Activated naive CD4-positive, alpha-beta T cell treated with anti-CD3 and anti-CD28 coated beads for 36 hours (primary cell): ENCODE measurements at regions of chr20 and their contacts with region 1.

Region 1: DNA sequence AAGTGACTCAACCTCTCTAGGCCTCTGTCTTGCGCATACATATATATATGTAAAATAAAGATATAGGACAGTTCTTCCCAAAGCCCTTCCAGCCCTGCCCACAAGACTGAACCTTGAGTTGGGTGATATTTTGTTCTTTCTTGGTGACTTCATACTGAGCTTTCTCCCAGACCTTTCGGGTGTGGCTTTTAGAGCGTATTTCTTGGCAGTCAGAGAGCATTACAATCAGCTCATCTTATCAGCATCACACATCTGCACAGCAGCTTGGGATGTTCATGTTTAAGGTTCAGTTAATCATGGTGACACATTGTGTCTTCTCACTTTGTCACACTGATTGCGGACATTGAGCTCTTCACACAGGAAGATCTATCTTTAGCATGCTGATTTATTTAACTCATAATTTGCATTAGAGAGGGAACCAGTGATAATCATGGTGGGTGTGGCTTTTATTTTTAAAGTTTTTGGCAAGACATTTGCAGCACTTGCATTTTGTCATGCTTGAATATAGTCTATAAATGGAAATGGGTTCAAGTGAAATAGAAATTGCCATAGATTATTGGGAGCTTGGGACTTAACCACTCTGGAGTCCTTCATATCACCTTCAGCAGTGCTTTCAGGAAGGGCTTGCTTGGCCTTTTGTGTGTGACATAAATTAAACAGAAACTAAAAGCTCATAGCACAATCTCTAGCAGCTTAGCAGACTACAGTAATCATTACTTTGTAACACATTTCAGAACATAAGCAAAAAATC is 8.3 kb downstream of the KIF3B start:
- DNase-seq: peak; percentile 78
- H3K4me3 Mint-ChIP-seq: peak overlapping the region; percentile 60
- H3K27ac Mint-ChIP-seq: peak overlapping the region; percentile 92
- H3K4me1 Mint-ChIP-seq: peaks cover 88% of the 10 kb centered on the region
- H3K27me3 Mint-ChIP-seq: no peaks in the 10 kb centered on the region

Region 2: DNA sequence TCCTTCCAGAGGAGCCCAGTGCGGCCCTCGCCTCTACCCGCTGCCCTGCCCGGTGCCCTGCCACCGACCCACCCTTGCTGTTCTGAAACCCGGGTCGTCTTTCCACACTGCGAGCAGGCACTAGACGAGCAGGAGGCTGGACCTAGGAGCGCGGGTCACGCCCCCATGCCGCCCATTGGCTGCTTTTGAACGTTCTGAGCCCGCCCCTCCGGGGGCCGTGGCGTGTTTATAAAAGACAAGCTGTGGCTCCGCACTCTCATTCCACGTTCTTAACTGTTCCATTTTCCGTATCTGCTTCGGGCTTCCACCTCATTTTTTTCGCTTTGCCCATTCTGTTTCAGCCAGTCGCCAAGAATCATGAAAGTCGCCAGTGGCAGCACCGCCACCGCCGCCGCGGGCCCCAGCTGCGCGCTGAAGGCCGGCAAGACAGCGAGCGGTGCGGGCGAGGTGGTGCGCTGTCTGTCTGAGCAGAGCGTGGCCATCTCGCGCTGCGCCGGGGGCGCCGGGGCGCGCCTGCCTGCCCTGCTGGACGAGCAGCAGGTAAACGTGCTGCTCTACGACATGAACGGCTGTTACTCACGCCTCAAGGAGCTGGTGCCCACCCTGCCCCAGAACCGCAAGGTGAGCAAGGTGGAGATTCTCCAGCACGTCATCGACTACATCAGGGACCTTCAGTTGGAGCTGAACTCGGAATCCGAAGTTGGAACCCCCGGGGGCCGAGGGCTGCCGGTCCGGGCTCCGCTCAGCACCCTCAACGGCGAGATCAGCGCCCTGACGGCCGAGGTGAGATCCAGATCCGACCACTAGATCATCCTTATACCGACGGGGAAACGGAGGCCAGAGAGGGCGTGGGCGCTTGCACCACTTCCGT is 680.5 kb before region 1 on chr20 and contains the start of gene ID1:
- CTCF ChIA-PET with region 1: no interaction called
- intact Hi-C with region 1: loop called (anchors 5 kb)
- DNase-seq: peak; percentile 89
- H3K4me3 Mint-ChIP-seq: peak within 1 kb of the TSS; percentile 85
- H3K27ac Mint-ChIP-seq: no peak within 1 kb of the TSS
- H3K4me1 Mint-ChIP-seq: peaks cover 26% of the 10 kb centered on the region
- H3K27me3 Mint-ChIP-seq: peaks cover 48% of the 10 kb centered on the region
- total RNA-seq, gene ID1: 1.8 to 2.4 TPM

Region 3: GRCh38 chr20:32207626-32208498 is 77.9 kb before region 1 on chr20 and contains the starts of genes PLAGL2 and POFUT1:
- CTCF ChIA-PET with region 1: interaction called, 5 read pairs
- intact Hi-C with region 1: loop called (anchors 1 kb)
- DNase-seq: peak; percentile 92
- H3K4me3 Mint-ChIP-seq: peak within 1 kb of the TSS; percentile 99
- H3K27ac Mint-ChIP-seq: peak within 1 kb of the TSS; percentile 98
- H3K4me1 Mint-ChIP-seq: peaks cover 65% of the 10 kb centered on the region
- H3K27me3 Mint-ChIP-seq: no peaks in the 10 kb centered on the region
- total RNA-seq, gene PLAGL2: 63.3 to 64.9 TPM
- total RNA-seq, gene POFUT1: 37.1 to 38.9 TPM

Region 4: DNA sequence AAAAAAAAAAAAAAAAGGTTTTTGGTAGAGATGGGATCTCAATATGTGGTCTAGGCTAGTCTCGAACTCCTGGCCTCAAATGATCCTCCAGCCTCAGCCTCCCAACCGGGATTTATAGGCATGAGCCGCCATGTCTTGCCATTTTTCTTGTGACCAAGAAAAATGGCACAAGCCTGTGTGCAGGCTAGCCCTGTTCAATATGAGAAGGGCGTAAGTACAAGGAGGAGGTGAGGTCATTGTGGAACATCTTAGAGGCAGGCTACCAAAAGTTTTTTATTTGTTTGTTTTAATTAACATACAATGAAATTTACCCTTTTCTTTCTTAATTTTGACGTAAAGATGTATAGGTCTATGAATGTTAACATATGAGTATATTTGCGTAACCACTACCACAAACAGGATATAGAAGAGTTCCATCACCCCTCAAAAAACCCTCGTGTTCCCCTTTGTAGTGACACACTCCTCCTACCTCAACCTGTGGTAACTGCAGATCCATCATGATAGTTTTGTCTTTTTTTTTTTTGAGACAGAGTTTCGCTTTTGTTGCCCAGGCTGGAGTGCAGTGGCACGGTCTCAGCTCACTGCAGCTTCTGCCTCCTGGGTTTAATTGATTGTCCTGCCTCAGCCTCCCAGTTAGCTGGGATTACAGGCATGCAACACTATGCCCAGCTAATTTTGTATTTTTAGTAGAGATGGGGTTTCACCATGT is 36.6 kb before region 1 on chr20:
- CTCF ChIA-PET with region 1: interaction called, 5 read pairs
- intact Hi-C with region 1: loop called (anchors 1 kb)
- DNase-seq: peak; percentile 61
- H3K4me3 Mint-ChIP-seq: peak overlapping the region; percentile 45
- H3K27ac Mint-ChIP-seq: peak overlapping the region; percentile 96
- H3K4me1 Mint-ChIP-seq: peaks cover 54% of the 10 kb centered on the region
- H3K27me3 Mint-ChIP-seq: no peaks in the 10 kb centered on the region

Region 5: GRCh38 chr20:32484958-32485769 is 199.4 kb after region 1 on chr20:
- CTCF ChIA-PET with region 1: no interaction called
- intact Hi-C with region 1: loop called (anchors 1 kb)
- DNase-seq: peak; percentile 95
- H3K4me3 Mint-ChIP-seq: peak overlapping the region; percentile 84
- H3K27ac Mint-ChIP-seq: peak overlapping the region; percentile 93
- H3K4me1 Mint-ChIP-seq: peaks cover 39% of the 10 kb centered on the region
- H3K27me3 Mint-ChIP-seq: no peaks in the 10 kb centered on the region

Region 6: GRCh38 chr20:32681175-32682084 is 395.6 kb after region 1 on chr20:
- CTCF ChIA-PET with region 1: no interaction called
- intact Hi-C with region 1: no loop called
- DNase-seq: peak; percentile 47
- H3K4me3 Mint-ChIP-seq: no peak overlapping the region
- H3K27ac Mint-ChIP-seq: no peak overlapping the region
- H3K4me1 Mint-ChIP-seq: peaks cover 3% of the 10 kb centered on the region
- H3K27me3 Mint-ChIP-seq: no peaks in the 10 kb centered on the region